ENCODE measurements at regions of chr6 and their contacts with region 1.

Region 1: GRCh38 chr6:43402820-43403219 is 24.5 kb upstream of the ABCC10 start:
- DNase-seq: no peak
- ATAC-seq: no peak
- H3K4me3 ChIP-seq: no peak overlapping the region
- H3K4me3 Mint-ChIP-seq: no peak overlapping the region
- H3K27ac ChIP-seq: no peak overlapping the region
- H3K27ac Mint-ChIP-seq: no peak overlapping the region
- H3K4me1 ChIP-seq: no peaks in the 10 kb centered on the region
- H3K4me1 Mint-ChIP-seq: peaks cover 0 to 3% (median 0%) of the 10 kb centered on the region in 7 donors
- H3K27me3 ChIP-seq: no peaks in the 10 kb centered on the region
- H3K27me3 Mint-ChIP-seq: peaks cover 4 to 56% (median 23%) of the 10 kb centered on the region in 5 donors

Region 2: DNA sequence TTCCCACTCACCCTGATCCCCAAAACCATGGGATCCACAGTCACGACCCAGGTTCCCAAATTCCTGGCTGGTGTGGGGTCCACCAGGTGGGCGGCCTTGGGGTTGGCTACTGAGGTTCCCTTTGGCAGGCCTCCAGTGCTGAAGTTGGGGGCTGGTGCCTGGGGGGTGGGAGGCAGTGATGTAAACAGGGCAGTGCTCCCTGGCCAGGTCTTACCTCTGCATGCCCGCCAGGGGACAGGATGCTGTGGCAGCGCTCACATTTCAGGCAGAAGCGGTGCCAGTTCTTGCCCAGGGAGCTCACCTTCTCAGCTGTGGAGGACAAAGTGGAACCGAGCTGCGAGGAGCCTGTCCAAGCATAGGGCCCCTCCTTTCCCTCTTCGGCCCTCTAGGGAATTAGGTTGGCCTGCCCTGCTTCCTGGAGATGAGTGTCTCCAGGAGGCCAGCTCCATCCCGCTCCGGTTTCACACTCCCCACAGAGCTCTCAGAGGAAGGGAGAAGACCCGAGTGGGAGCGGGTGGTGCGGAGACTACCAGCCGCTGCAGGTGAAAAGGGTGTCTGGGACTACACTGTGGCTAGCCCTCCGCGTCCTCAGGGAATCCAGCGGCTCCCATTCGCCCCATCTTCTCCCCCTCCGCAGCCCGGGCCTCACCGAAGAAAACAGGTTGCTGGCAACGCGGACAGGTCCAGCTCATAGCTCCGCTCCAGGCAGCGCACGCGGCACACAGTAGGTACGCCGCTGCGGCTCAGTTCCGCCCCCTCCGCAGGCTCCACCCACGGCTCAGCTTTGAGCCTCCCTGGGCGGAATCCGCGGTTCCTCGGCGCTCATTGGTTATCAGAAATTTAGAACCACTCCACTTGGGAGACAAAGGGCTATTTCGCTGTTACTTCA is 94.5 kb before region 1 on chr6 and contains the start of gene CRIP3:
- CTCF ChIA-PET with region 1: interaction called, 3 read pairs
- POLR2A ChIA-PET with region 1: no interaction called
- intact Hi-C with region 1: loop called in 1 of 2 experiments (anchors 1 kb)
- DNase-seq: peak; percentile 12 to 58 (median 50)
- ATAC-seq: peak; percentile 82
- H3K4me3 ChIP-seq: peak within 1 kb of the TSS; percentile 59
- H3K4me3 Mint-ChIP-seq: peak within 1 kb of the TSS; percentile 78 to 89 (median 84)
- H3K27ac ChIP-seq: peak within 1 kb of the TSS; percentile 27
- H3K27ac Mint-ChIP-seq: peak within 1 kb of the TSS in 6 of 9 donors; percentile 24 to 65 (median 36)
- H3K4me1 ChIP-seq: peaks cover 8 to 11% of the 10 kb centered on the region in 2 donors
- H3K4me1 Mint-ChIP-seq: peaks cover 6 to 13% (median 10%) of the 10 kb centered on the region in 7 donors
- H3K27me3 ChIP-seq: no peaks in the 10 kb centered on the region
- H3K27me3 Mint-ChIP-seq: peaks cover 0 to 27% (median 0%) of the 10 kb centered on the region in 5 donors
- total RNA-seq, gene CRIP3: 2.1 to 7.4 (median 4.8) TPM in 4 of 5 experiments, not detected in the other

Region 3: GRCh38 chr6:43361269-43361668 is 41.6 kb before region 1 on chr6:
- CTCF ChIA-PET with region 1: interaction called, 8 read pairs
- POLR2A ChIA-PET with region 1: interaction called, 3 read pairs
- intact Hi-C with region 1: loop called in 1 of 2 experiments (anchors 1 kb)
- DNase-seq: peak in 1 of 9 donors; percentile 2
- ATAC-seq: no peak
- H3K4me3 ChIP-seq: no peak overlapping the region
- H3K4me3 Mint-ChIP-seq: no peak overlapping the region
- H3K27ac ChIP-seq: no peak overlapping the region
- H3K27ac Mint-ChIP-seq: peak overlapping the region in 1 of 9 donors; percentile 54
- H3K4me1 ChIP-seq: peaks cover 0 to 3% of the 10 kb centered on the region in 2 donors
- H3K4me1 Mint-ChIP-seq: peaks cover 3 to 69% (median 39%) of the 10 kb centered on the region in 7 donors
- H3K27me3 ChIP-seq: no peaks in the 10 kb centered on the region
- H3K27me3 Mint-ChIP-seq: no peaks in the 10 kb centered on the region

Region 4: DNA sequence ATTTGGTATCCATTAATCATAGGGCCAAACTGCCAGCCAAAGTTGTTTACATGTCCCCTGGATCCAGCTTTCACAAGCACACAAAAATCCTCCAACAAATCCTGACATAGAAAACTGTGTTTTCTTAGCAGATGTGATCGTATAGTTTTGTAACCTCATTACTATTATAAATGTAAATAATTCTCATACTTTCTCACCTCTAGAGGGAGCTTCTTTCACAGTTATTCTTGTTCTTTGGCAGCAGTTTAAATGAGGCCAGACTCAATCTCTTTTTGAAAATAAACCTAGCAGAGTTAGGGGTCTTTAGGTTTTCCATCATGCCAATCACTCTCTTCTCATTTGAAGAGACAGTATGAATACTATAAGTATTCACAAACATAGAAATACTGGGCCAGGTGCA is 16.3 kb before region 1 on chr6:
- CTCF ChIA-PET with region 1: interaction called, 17 read pairs
- POLR2A ChIA-PET with region 1: interaction called, 5 read pairs
- intact Hi-C with region 1: loop called in 1 of 2 experiments (anchors 1 kb)
- DNase-seq: peak in 3 of 9 donors; percentile 43 to 64 (median 44)
- ATAC-seq: no peak
- H3K4me3 ChIP-seq: no peak overlapping the region
- H3K4me3 Mint-ChIP-seq: peak overlapping the region in 4 of 10 donors; percentile 23 to 63 (median 40)
- H3K27ac ChIP-seq: no peak overlapping the region
- H3K27ac Mint-ChIP-seq: peak overlapping the region in 8 of 9 donors; percentile 6 to 95 (median 73)
- H3K4me1 ChIP-seq: peaks cover 46 to 59% of the 10 kb centered on the region in 2 donors
- H3K4me1 Mint-ChIP-seq: peaks cover 54 to 78% (median 72%) of the 10 kb centered on the region in 7 donors
- H3K27me3 ChIP-seq: no peaks in the 10 kb centered on the region
- H3K27me3 Mint-ChIP-seq: peaks cover 0 to 67% (median 4%) of the 10 kb centered on the region in 5 donors

Measured in naive thymus-derived CD4-positive, alpha-beta T cell (primary cell).